B cell (primary cell): ENCODE measurements at regions of chr17 and their contacts with region 1.

Region 1: GRCh38 chr17:43393944-43394482 is 4.8 kb upstream of the ARL4D start:
- DNase-seq: peak; percentile 90
- ATAC-seq: peak; percentile 22
- H3K4me3 ChIP-seq: no peak overlapping the region
- H3K4me3 Mint-ChIP-seq: no peak overlapping the region
- H3K27ac ChIP-seq: no peak overlapping the region
- H3K27ac Mint-ChIP-seq: no peak overlapping the region
- H3K4me1 ChIP-seq: peaks cover 24 to 50% of the 10 kb centered on the region in 2 donors
- H3K4me1 Mint-ChIP-seq: peaks cover 43% of the 10 kb centered on the region
- H3K27me3 ChIP-seq: no peaks in the 10 kb centered on the region
- H3K27me3 Mint-ChIP-seq: no peaks in the 10 kb centered on the region
- CTCF ChIP-seq: peak; percentile 87

Region 2: DNA sequence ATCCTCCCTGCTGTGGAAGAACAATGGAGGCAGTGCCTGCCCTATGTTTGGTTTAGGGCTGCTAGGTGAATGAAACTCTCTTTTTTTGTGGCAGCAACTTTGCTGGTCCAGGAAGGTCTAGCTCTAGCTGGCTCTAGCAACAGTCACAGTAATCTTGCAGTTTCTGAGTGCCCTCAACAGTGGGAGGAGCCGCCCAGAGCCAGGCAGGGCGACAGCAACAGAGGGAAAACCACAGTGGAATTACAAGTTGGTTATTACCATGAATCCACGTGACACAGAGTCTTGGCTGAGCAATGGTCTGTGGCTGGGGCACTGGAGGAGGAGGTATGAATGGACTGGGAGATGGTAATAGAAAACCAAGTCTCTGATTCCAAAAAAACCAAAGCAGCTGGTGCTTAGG is 1261.1 kb before region 1 on chr17:
- CTCF ChIA-PET with region 1: no interaction called
- POLR2A ChIA-PET with region 1: no interaction called
- intact Hi-C with region 1: no loop called
- DNase-seq: no peak
- ATAC-seq: peak; percentile 48
- H3K4me3 ChIP-seq: peak overlapping the region in 3 of 5 experiments; percentile 15 to 29 (median 15)
- H3K4me3 Mint-ChIP-seq: peak overlapping the region; percentile 54
- H3K27ac ChIP-seq: peak overlapping the region; percentile 65 to 75
- H3K27ac Mint-ChIP-seq: peak overlapping the region; percentile 93
- H3K4me1 ChIP-seq: peaks cover 58 to 64% of the 10 kb centered on the region in 2 donors
- H3K4me1 Mint-ChIP-seq: peaks cover 57% of the 10 kb centered on the region
- H3K27me3 ChIP-seq: no peaks in the 10 kb centered on the region
- H3K27me3 Mint-ChIP-seq: no peaks in the 10 kb centered on the region
- CTCF ChIP-seq: no peak

Region 3: DNA sequence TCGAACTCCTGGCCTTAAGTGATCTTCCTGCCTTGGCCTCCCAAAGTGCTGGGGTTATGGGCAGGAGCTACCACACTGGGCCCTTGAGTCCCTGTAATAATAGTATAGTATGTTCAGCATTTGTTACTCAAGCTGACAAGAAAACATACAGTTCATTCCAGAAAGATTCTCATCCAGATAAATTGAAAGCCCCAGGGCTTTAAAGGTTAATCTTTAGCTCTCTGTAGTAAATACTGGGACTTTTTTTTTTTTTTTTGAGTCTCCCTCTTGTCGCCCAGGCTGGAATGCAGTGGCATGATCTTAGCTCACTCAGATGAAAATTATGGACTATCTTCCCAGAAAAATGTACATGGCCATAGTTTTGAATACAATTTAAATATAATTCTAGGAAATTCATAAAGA is 279.9 kb before region 1 on chr17:
- CTCF ChIA-PET with region 1: no interaction called
- POLR2A ChIA-PET with region 1: no interaction called
- intact Hi-C with region 1: no loop called
- DNase-seq: no peak
- ATAC-seq: no peak
- H3K4me3 ChIP-seq: no peak overlapping the region
- H3K4me3 Mint-ChIP-seq: no peak overlapping the region
- H3K27ac ChIP-seq: no peak overlapping the region
- H3K27ac Mint-ChIP-seq: no peak overlapping the region
- H3K4me1 ChIP-seq: no peaks in the 10 kb centered on the region
- H3K4me1 Mint-ChIP-seq: no peaks in the 10 kb centered on the region
- H3K27me3 ChIP-seq: no peaks in the 10 kb centered on the region
- H3K27me3 Mint-ChIP-seq: no peaks in the 10 kb centered on the region
- CTCF ChIP-seq: no peak

Region 4: GRCh38 chr17:43367737-43368242 is 26.2 kb before region 1 on chr17:
- CTCF ChIA-PET with region 1: interaction called, 71 read pairs
- POLR2A ChIA-PET with region 1: interaction called, 220 read pairs
- intact Hi-C with region 1: loop called (anchors 1 kb)
- DNase-seq: no peak
- ATAC-seq: peak; percentile 40
- H3K4me3 ChIP-seq: peak overlapping the region; percentile 59 to 84 (median 64)
- H3K4me3 Mint-ChIP-seq: peak overlapping the region; percentile 99
- H3K27ac ChIP-seq: peak overlapping the region; percentile 96 to 98
- H3K27ac Mint-ChIP-seq: peak overlapping the region; percentile 100
- H3K4me1 ChIP-seq: peaks cover 33 to 50% of the 10 kb centered on the region in 2 donors
- H3K4me1 Mint-ChIP-seq: peaks cover 44% of the 10 kb centered on the region
- H3K27me3 ChIP-seq: no peaks in the 10 kb centered on the region
- H3K27me3 Mint-ChIP-seq: no peaks in the 10 kb centered on the region
- CTCF ChIP-seq: no peak

Region 5: GRCh38 chr17:43428524-43428923 is 34.5 kb after region 1 on chr17:
- CTCF ChIA-PET with region 1: interaction called, 11 read pairs
- POLR2A ChIA-PET with region 1: no interaction called
- intact Hi-C with region 1: no loop called
- DNase-seq: no peak
- ATAC-seq: no peak
- H3K4me3 ChIP-seq: no peak overlapping the region
- H3K4me3 Mint-ChIP-seq: no peak overlapping the region
- H3K27ac ChIP-seq: no peak overlapping the region
- H3K27ac Mint-ChIP-seq: no peak overlapping the region
- H3K4me1 ChIP-seq: peaks cover 3% of the 10 kb centered on the region in 2 donors
- H3K4me1 Mint-ChIP-seq: peaks cover 3% of the 10 kb centered on the region
- H3K27me3 ChIP-seq: peaks cover 0 to 24% (median 4%) of the 10 kb centered on the region in 4 experiments
- H3K27me3 Mint-ChIP-seq: peaks cover 20% of the 10 kb centered on the region
- CTCF ChIP-seq: no peak